RWPE1 (cell line): ENCODE measurements at regions of chr12 and their contacts with region 1.

Region 1: GRCh38 chr12:63843721-63844390 is 644 bp upstream of the SRGAP1 start:
- DNase-seq: peak; percentile 88
- H3K27ac ChIP-seq: peak overlapping the region; percentile 89
- CTCF ChIP-seq: peak; percentile 94

Region 2: DNA sequence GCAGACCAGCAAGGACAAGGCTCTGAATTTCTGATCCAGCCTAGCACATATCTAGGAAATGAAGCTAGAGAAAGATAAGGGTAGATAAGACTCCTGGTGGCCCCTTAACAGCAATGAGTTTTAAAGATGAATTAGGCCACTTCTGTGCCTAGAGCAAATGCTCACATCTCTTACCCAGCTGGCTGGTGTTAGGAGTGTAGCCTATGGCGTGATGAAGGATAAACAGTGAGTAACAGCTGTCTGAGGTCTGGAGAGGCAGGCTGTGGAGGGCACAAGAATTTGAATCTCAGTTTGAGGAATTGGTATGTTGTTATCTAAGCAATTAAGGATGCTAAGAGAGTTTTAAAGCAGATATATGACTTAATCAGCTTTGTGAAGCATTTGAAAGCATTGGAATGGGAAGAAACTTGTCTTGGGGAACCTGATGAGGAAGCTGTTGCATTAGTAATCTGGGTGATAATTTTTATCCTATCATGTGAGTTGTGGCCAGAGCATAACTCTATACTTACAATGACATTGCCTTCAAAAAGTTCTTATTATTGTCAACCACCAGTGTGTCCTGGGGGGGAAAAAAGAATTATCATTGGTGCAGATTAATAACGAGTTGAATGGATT is 162.5 kb after region 1 on chr12:
- CTCF ChIA-PET with region 1: interaction called, 12 read pairs
- POLR2A ChIA-PET with region 1: no interaction called
- DNase-seq: no peak
- H3K27ac ChIP-seq: no peak overlapping the region
- CTCF ChIP-seq: no peak

Region 3: DNA sequence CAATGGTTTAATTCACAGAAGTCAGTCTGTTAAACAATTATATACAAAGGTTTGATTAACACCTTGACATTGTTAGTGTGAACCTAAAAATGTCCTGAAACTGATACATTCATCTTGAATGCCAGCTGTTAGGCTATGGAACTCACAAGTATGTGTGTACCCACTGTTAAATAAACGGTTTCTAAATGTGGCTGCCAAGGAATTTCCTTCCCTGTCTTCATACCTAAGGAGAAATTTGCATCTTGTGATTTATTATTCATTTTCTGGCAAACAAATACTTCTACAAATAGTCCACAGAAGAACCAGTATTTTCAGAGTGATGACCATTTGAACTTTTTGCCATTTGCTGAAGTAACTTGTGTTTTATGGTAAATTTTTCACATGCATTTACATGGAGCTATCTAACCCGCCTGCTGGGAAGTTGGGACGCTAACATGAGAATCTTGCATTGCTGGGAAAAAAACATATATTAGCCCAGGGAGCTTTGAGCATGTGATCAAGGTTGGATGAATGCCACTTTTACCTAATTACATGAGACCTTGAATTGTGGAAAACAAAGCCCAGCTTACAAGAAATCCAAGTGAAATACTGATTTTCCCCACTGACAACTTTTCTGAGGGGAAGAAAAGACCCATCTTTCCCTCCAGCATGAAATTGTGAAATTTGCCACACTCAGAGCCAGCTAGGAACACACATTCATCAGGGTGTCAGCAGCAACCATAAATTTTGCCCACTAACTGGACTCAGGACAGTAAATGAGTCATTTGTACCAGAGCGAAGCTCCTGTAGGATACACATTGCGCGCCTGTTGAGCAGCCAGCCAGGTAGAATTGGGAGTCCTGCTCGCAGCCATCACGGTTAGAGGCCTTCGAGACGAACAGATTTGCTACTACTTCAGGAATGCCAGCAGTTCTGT is 260.2 kb after region 1 on chr12:
- CTCF ChIA-PET with region 1: interaction called, 11 read pairs
- POLR2A ChIA-PET with region 1: no interaction called
- DNase-seq: peak; percentile 81
- H3K27ac ChIP-seq: peak overlapping the region; percentile 86
- CTCF ChIP-seq: no peak

Region 4: GRCh38 chr12:64181504-64182291 is 337.8 kb after region 1 on chr12:
- CTCF ChIA-PET with region 1: interaction called, 16 read pairs
- POLR2A ChIA-PET with region 1: no interaction called
- DNase-seq: peak; percentile 85
- H3K27ac ChIP-seq: no peak overlapping the region
- CTCF ChIP-seq: peak; percentile 77

Region 5: GRCh38 chr12:64256166-64256800 is 412.4 kb after region 1 on chr12:
- CTCF ChIA-PET with region 1: interaction called, 17 read pairs
- POLR2A ChIA-PET with region 1: no interaction called
- DNase-seq: peak; percentile 46
- H3K27ac ChIP-seq: no peak overlapping the region
- CTCF ChIP-seq: peak; percentile 74